ENCODE measurements at regions of chr10 and their contacts with region 1.

Region 1: GRCh38 chr10:109902934-109903589 is 20.2 kb downstream of the XPNPEP1 start:
- DNase-seq: peak; percentile 34
- H3K4me3 Mint-ChIP-seq: peak overlapping the region; percentile 59
- H3K27ac Mint-ChIP-seq: peak overlapping the region; percentile 86
- H3K4me1 Mint-ChIP-seq: peaks cover 63% of the 10 kb centered on the region
- H3K27me3 Mint-ChIP-seq: no peaks in the 10 kb centered on the region

Region 2: DNA sequence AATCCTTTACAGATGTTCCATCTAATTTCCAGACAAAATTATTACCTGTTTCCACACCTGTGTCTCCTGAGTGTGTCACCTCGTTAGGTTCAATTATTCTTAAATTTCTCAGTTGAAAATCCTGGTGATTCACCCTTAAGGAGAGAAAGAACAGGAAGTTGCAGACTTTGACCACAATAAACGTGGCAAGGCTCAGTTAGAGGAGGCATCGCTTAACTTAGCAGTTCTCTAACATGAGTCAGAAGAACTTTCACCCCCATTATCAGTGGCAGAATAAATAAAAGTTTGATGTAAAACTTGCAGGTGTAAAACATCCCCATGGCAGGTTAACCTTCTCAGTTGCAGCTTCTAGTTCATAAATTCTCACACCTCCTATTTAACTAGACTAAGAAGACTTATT is 11.9 kb after region 1 on chr10:
- CTCF ChIA-PET with region 1: interaction called, 4 read pairs
- POLR2A ChIA-PET with region 1: no interaction called
- intact Hi-C with region 1: loop called (anchors 2 kb)
- DNase-seq: peak; percentile 56
- H3K4me3 Mint-ChIP-seq: peak overlapping the region; percentile 2
- H3K27ac Mint-ChIP-seq: peak overlapping the region; percentile 58
- H3K4me1 Mint-ChIP-seq: peaks cover 92% of the 10 kb centered on the region
- H3K27me3 Mint-ChIP-seq: no peaks in the 10 kb centered on the region

Measured in activated CD4-positive, alpha-beta memory T cell treated with anti-CD3 and anti-CD28 coated beads for 36 hours (primary cell).